ENCODE measurements at regions of chr5 and their contacts with region 1.

Region 1: DNA sequence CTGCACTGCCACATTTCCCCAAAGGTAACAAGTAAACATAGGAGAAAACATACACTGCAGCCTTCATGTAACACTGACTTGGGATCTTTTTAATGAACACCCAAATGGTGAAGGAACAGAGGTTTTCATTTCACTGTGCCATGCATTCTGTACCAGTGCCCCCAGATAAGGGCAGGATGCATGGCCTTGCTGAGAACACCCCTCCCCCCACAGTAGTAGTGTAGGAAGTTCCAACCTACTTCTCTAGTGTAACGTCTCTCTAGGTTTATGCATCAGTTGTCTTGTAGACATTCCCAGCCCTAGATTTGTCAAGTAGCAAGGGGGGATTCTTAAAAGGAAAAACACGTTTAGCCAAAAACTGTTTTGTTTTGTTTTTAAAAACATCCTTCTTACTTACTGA is 29.9 kb downstream of the MAP3K1 start:
- DNase-seq: no peak
- H3K4me3 Mint-ChIP-seq: no peak overlapping the region
- H3K27ac Mint-ChIP-seq: peak overlapping the region; percentile 27
- H3K4me1 Mint-ChIP-seq: peaks cover 85% of the 10 kb centered on the region
- H3K27me3 Mint-ChIP-seq: no peaks in the 10 kb centered on the region

Region 2: DNA sequence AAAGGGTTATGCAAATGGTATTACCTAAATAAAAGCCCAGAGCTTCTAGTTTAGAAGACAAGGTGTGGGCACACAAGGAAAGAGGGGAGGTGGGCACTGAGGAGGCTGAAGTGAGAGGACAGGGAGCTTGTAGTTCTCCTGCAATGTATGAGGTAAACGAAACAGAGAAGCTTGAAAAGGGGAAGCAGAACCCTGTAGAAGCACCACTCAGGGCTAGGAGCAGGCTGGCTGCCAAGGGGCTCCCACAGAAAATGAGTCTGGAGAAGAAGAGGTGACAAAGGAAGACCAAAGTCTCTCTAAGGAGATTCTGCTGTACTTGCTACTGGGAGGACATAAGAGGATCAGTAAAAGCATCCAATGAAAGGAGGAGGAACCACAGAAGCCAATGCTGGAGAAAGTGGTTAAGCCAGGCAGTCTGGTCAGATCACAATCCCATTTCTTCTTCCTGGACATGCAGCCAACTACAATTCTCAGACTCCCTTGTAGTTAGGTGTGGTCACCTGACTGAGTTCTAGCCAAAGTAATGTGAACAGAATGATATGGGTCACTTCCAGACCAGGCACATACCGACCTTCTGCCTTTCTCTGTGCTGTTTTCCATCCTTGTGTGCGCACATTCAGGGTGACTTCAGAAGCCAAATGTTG is 204.4 kb before region 1 on chr5:
- CTCF ChIA-PET with region 1: no interaction called
- intact Hi-C with region 1: no loop called
- DNase-seq: no peak
- H3K4me3 Mint-ChIP-seq: no peak overlapping the region
- H3K27ac Mint-ChIP-seq: no peak overlapping the region
- H3K4me1 Mint-ChIP-seq: peaks cover 3% of the 10 kb centered on the region
- H3K27me3 Mint-ChIP-seq: no peaks in the 10 kb centered on the region

Region 3: DNA sequence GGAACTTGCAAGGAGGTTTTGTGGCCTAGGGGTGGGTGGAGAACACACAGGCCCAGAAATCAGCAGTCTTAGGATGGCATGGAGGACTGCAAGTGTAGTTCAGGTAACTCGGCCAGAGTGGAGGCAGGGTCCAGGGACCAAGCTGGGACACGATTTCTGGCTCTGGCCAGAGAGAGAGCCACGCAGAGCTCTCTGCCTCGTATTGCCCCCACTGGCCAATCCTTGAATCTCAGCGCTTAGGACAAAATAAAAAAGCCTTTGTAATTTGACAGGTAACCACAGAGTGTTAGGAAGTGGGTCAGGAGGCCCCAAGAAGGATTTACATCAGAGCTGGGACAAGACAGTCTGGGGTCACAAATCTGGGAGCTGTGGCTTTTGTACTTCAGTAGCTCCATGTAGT is 18.2 kb before region 1 on chr5:
- CTCF ChIA-PET with region 1: interaction called, 8 read pairs
- intact Hi-C with region 1: loop called (anchors 1 kb)
- DNase-seq: peak; percentile 30
- H3K4me3 Mint-ChIP-seq: peak overlapping the region; percentile 4
- H3K27ac Mint-ChIP-seq: peak overlapping the region; percentile 79
- H3K4me1 Mint-ChIP-seq: peaks cover 91% of the 10 kb centered on the region
- H3K27me3 Mint-ChIP-seq: no peaks in the 10 kb centered on the region

Measured in activated naive CD4-positive, alpha-beta T cell treated with anti-CD3 and anti-CD28 coated beads for 36 hours (primary cell).